HCT116 (cell line): ENCODE measurements at regions of chr14 and their contacts with region 1.

Region 1: GRCh38 chr14:65412032-65412846 is at the start of gene FUT8:
- DNase-seq: peak; percentile 88
- ATAC-seq: peak; percentile 86
- H3K4me3 ChIP-seq: peak within 1 kb of the TSS; percentile 71 to 91
- H3K27ac ChIP-seq: peak within 1 kb of the TSS; percentile 93
- H3K4me1 ChIP-seq: peaks cover 2 to 21% of the 10 kb centered on the region in 2 experiments; a peak in 2 of 4 replicates
- H3K27me3 ChIP-seq: no peaks in the 10 kb centered on the region
- CTCF ChIP-seq: peak; percentile 46 to 56 (median 49); a peak in 5 of 6 replicates
- POLR2A ChIP-seq: peak; percentile 69
- RAD21 ChIP-seq: peak; percentile 70
- total RNA-seq, gene FUT8: 42.3 TPM

Region 2: DNA sequence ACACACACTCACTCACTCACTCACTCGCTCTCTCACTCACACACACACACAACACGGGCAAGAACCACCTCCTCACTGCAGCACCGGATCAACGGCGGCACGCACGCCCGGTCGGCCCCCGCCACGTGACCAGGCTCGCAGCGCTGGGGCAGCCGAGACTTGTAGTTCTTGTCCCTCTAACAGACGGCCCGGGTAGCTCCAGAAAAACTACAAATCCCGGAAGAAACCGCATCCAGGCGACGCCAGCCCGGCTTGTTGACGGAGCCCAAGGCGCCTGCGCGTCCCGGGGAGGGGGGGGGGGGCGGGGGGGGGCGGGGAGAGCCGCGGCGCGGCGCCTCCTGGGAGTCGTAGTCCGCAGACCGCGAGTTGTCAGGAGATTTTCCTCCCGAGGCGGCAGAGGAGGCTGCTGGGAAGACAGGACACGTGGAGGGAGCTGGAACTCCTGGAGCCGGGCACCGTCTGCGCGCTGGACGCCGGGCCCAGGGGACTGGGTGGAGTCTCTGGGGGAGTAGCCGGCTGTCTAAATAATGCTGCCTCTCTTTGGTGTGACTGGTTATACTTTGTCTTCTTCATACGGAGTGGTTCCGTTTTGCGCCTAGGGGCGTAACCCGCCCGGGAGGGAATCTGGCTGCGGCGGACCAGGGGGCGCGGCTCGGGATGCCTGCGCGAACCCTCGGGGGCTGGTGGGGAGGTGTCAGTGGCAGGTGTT is 309.6 kb before region 1 on chr14 and contains the start of gene MAX:
- CTCF ChIA-PET with region 1: interaction called, 3 read pairs
- POLR2A ChIA-PET with region 1: interaction called, 4 read pairs
- RAD21 ChIA-PET with region 1: interaction called in 1 of 2 experiments, 6 read pairs
- intact Hi-C with region 1: loop called (anchors 5 kb)
- DNase-seq: peak; percentile 96
- ATAC-seq: peak; percentile 89
- H3K4me3 ChIP-seq: peak within 1 kb of the TSS; percentile 84 to 85
- H3K27ac ChIP-seq: peak within 1 kb of the TSS; percentile 52
- H3K4me1 ChIP-seq: peaks cover 8 to 16% of the 10 kb centered on the region in 2 experiments; a peak in 2 of 4 replicates
- H3K27me3 ChIP-seq: no peaks in the 10 kb centered on the region
- CTCF ChIP-seq: no peak
- POLR2A ChIP-seq: peak; percentile 60
- RAD21 ChIP-seq: no peak
- total RNA-seq, gene MAX: 72.6 TPM

Region 3: DNA sequence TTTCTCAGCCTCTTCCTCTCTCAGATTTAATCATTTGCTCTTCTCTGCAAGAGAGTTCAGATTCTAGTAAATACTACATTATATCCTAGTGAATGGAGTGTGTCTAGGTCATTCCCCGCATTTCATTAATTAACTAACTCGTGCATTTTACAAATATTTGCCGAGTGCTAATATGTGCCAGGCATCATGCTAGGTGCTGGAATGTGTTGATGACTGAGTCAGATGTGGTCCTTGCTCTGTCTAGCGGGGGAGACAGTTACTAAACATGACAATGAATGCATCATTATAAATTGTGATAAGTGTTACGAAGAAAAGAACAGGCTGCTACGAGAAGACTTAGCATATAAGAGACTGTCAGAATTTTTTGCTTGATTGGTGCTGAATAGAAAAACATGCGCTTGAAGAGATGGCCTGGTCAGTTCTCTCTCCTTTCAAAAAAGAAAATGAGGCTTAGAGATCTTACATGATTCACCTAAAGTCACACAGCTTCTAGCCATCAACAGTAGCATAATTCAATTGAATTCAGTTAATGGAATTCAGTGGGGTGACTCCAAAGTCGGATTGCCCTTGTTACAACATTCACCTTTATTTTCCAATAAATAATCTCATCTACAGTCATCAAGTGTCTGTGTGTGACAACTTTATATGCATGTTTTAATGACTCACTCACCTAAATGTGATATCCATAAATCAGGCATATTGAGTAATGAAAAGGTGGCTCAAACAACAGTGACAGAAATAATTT is 261.2 kb before region 1 on chr14:
- CTCF ChIA-PET with region 1: no interaction called
- POLR2A ChIA-PET with region 1: no interaction called
- RAD21 ChIA-PET with region 1: no interaction called
- intact Hi-C with region 1: no loop called
- DNase-seq: no peak
- ATAC-seq: no peak
- H3K4me3 ChIP-seq: no peak overlapping the region
- H3K27ac ChIP-seq: no peak overlapping the region
- H3K4me1 ChIP-seq: no peaks in the 10 kb centered on the region
- H3K27me3 ChIP-seq: no peaks in the 10 kb centered on the region
- CTCF ChIP-seq: no peak
- POLR2A ChIP-seq: no peak
- RAD21 ChIP-seq: no peak

Region 4: GRCh38 chr14:65222440-65222858 is 189.8 kb before region 1 on chr14:
- CTCF ChIA-PET with region 1: interaction called, 8 read pairs
- POLR2A ChIA-PET with region 1: interaction called, 4 read pairs
- RAD21 ChIA-PET with region 1: no interaction called
- intact Hi-C with region 1: loop called (anchors 2 kb)
- DNase-seq: peak; percentile 60
- ATAC-seq: peak; percentile 94
- H3K4me3 ChIP-seq: no peak overlapping the region
- H3K27ac ChIP-seq: no peak overlapping the region
- H3K4me1 ChIP-seq: peaks cover 0 to 33% of the 10 kb centered on the region in 2 experiments; a peak in 3 of 4 replicates
- H3K27me3 ChIP-seq: no peaks in the 10 kb centered on the region
- CTCF ChIP-seq: peak; percentile 74 to 89 (median 87); a peak in 5 of 6 replicates
- POLR2A ChIP-seq: no peak
- RAD21 ChIP-seq: peak; percentile 95

Region 5: GRCh38 chr14:65356327-65356852 is 55.8 kb before region 1 on chr14:
- CTCF ChIA-PET with region 1: interaction called, 6 read pairs
- POLR2A ChIA-PET with region 1: interaction called, 12 read pairs
- RAD21 ChIA-PET with region 1: no interaction called
- intact Hi-C with region 1: no loop called
- DNase-seq: peak; percentile 98
- ATAC-seq: peak; percentile 94
- H3K4me3 ChIP-seq: peak overlapping the region; percentile 49 to 50
- H3K27ac ChIP-seq: peak overlapping the region; percentile 60
- H3K4me1 ChIP-seq: peaks cover 27 to 69% of the 10 kb centered on the region in 2 experiments
- H3K27me3 ChIP-seq: no peaks in the 10 kb centered on the region
- CTCF ChIP-seq: no peak
- POLR2A ChIP-seq: peak; percentile 55
- RAD21 ChIP-seq: peak; percentile 30; the same call in 1 of the 2 replicates

Region 6: GRCh38 chr14:65560340-65561027 is 148.2 kb after region 1 on chr14:
- CTCF ChIA-PET with region 1: no interaction called
- POLR2A ChIA-PET with region 1: no interaction called
- RAD21 ChIA-PET with region 1: no interaction called
- intact Hi-C with region 1: no loop called
- DNase-seq: no peak
- ATAC-seq: no peak
- H3K4me3 ChIP-seq: no peak overlapping the region
- H3K27ac ChIP-seq: no peak overlapping the region
- H3K4me1 ChIP-seq: no peaks in the 10 kb centered on the region
- H3K27me3 ChIP-seq: no peaks in the 10 kb centered on the region
- CTCF ChIP-seq: no peak
- POLR2A ChIP-seq: no peak
- RAD21 ChIP-seq: no peak

Region 7: DNA sequence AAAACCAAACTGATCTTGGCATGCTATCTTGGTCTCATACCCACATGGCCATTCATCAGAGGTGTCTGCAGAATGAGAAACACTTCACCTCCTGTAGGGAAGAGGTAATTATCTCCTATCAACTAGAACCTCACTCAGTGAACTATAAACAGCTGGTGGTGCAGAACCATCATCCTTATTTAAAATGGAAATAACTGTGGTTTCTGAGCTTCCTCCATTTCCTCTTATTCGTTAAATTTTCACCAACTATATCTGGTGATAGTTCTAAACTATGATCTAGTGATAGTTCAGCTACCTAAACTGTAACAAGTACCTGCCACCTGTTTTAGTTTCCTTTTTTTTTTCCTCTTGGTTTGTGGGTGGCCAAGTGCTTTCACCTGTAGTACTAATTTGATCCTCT is 218.8 kb after region 1 on chr14:
- CTCF ChIA-PET with region 1: interaction called, 20 read pairs
- POLR2A ChIA-PET with region 1: no interaction called
- RAD21 ChIA-PET with region 1: interaction called in 1 of 2 experiments, 8 read pairs
- intact Hi-C with region 1: no loop called
- DNase-seq: no peak
- ATAC-seq: no peak
- H3K4me3 ChIP-seq: no peak overlapping the region
- H3K27ac ChIP-seq: no peak overlapping the region
- H3K4me1 ChIP-seq: no peaks in the 10 kb centered on the region
- H3K27me3 ChIP-seq: no peaks in the 10 kb centered on the region
- CTCF ChIP-seq: no peak
- POLR2A ChIP-seq: no peak
- RAD21 ChIP-seq: no peak

Region 8: GRCh38 chr14:65832431-65833266 is 420.4 kb after region 1 on chr14:
- CTCF ChIA-PET with region 1: interaction called, 17 read pairs
- POLR2A ChIA-PET with region 1: no interaction called
- RAD21 ChIA-PET with region 1: interaction called in 1 of 2 experiments, 3 read pairs
- intact Hi-C with region 1: no loop called
- DNase-seq: no peak
- ATAC-seq: peak; percentile 69
- H3K4me3 ChIP-seq: no peak overlapping the region
- H3K27ac ChIP-seq: no peak overlapping the region
- H3K4me1 ChIP-seq: no peaks in the 10 kb centered on the region
- H3K27me3 ChIP-seq: 0 out of 2 replicates have a peak, but pooled peaks cover 8% of the 10 kb centered on the region
- CTCF ChIP-seq: peak; percentile 18 to 42 (median 39); a peak in 4 of 6 replicates
- POLR2A ChIP-seq: no peak
- RAD21 ChIP-seq: no peak

Region 9: DNA sequence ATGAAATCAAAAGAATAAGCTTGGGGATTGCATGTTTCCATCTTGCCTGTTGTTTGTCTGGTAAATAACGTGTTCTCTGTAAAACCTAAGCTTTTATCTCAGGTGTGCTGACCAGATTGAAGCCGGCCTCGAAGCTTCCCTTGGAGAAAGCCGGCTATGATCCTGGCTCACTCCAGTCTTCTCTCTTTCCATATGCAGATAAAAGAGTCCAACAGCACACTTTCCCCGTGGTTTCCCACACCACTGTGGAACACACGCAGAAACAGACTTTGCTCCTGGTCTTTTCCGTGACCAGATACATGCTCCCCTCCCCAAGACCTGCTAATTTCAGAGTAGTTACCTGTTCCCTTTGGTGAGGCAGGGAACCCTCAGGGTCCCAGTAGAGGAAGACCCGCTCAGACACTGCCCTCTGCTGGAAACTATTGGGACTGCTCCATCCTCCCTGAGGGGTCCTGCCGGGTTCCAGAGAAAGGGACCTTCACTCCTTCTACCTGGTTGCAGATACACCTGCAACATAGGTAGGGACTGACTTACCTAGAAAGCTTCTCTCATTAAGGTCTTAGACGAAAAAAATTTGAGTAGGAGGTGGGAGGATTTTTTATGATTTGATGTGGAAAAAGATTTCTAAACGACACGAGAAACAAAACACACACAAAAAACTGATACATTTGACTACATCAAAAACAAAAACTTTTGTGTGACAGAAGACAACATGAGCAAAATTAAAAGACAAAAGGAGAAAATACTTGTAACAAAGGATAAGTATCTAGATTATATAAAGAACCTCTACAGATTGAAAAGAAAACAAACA is 658.5 kb after region 1 on chr14:
- CTCF ChIA-PET with region 1: interaction called, 5 read pairs
- POLR2A ChIA-PET with region 1: no interaction called
- RAD21 ChIA-PET with region 1: no interaction called
- intact Hi-C with region 1: loop called (anchors 2 kb)
- DNase-seq: peak; percentile 35
- ATAC-seq: peak; percentile 96
- H3K4me3 ChIP-seq: no peak overlapping the region
- H3K27ac ChIP-seq: no peak overlapping the region
- H3K4me1 ChIP-seq: no peaks in the 10 kb centered on the region
- H3K27me3 ChIP-seq: no peaks in the 10 kb centered on the region
- CTCF ChIP-seq: peak; percentile 56 to 98 (median 94); a peak in 5 of 6 replicates
- POLR2A ChIP-seq: no peak
- RAD21 ChIP-seq: peak; percentile 81